Naive thymus-derived CD4-positive, alpha-beta T cell (primary cell): ENCODE measurements at regions of chr7 and their contacts with region 1.

Region 1: DNA sequence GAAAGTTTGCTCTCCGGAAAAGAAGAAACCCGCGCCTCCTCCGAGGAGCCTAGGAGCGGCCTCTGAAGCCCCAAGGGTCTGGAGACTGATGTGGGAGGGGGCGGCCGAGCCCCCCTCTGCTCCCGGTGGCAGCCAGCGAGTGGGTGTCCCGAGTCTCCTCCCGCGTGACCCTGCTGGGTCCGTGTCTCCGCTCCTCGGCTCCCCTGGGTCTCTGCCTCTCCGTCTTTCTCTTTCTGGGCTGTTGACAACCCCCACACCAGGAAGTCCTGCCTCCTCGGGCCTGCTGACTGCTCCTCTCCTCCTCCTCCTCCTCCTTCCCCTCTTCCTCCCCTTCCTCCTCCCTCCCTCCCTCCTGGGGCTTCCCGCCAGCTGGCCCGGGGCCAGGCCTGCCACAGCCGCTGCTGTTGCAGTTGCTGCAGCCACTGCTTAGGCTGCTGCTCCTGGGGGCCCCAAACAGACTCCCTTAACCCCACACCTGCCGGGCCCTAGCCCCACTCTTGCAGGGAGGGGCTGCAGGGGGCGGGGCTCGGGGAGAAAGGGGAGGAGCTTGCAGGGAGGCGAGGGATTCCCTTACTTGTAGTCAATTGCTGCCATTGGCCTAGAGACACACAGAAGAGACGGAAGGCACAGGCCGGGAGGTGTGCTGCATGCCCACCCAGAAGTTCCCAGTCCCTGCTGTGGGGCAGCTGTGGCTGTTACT is at the start of gene TSC22D4:
- DNase-seq: peak; percentile 82 to 96 (median 95)
- ATAC-seq: peak; percentile 83
- H3K4me3 ChIP-seq: peak within 1 kb of the TSS; percentile 97
- H3K4me3 Mint-ChIP-seq: peak within 1 kb of the TSS; percentile 92 to 100 (median 98)
- H3K27ac ChIP-seq: peak within 1 kb of the TSS; percentile 87
- H3K27ac Mint-ChIP-seq: peak within 1 kb of the TSS; percentile 80 to 98 (median 93)
- H3K4me1 ChIP-seq: peaks cover 42 to 51% of the 10 kb centered on the region in 2 donors
- H3K4me1 Mint-ChIP-seq: peaks cover 25 to 62% (median 38%) of the 10 kb centered on the region in 7 donors
- H3K27me3 ChIP-seq: no peaks in the 10 kb centered on the region
- H3K27me3 Mint-ChIP-seq: peaks cover 0 to 2% (median 0%) of the 10 kb centered on the region in 5 donors
- total RNA-seq, gene TSC22D4: 75.6 to 124 (median 115) TPM

Region 2: GRCh38 chr7:100435401-100436304 is 43.5 kb before region 1 on chr7:
- CTCF ChIA-PET with region 1: no interaction called
- POLR2A ChIA-PET with region 1: interaction called, 25 read pairs
- intact Hi-C with region 1: loop called (anchors 1 kb)
- DNase-seq: peak in 7 of 9 donors; percentile 44 to 57 (median 55)
- ATAC-seq: peak; percentile 26
- H3K4me3 ChIP-seq: peak overlapping the region; percentile 89
- H3K4me3 Mint-ChIP-seq: peak overlapping the region; percentile 86 to 100 (median 95)
- H3K27ac ChIP-seq: peak overlapping the region; percentile 98
- H3K27ac Mint-ChIP-seq: peak overlapping the region; percentile 88 to 99 (median 97)
- H3K4me1 ChIP-seq: peaks cover 22 to 36% of the 10 kb centered on the region in 2 donors
- H3K4me1 Mint-ChIP-seq: peaks cover 30 to 52% (median 43%) of the 10 kb centered on the region in 7 donors
- H3K27me3 ChIP-seq: no peaks in the 10 kb centered on the region
- H3K27me3 Mint-ChIP-seq: peaks cover 0 to 4% (median 0%) of the 10 kb centered on the region in 5 donors

Region 3: DNA sequence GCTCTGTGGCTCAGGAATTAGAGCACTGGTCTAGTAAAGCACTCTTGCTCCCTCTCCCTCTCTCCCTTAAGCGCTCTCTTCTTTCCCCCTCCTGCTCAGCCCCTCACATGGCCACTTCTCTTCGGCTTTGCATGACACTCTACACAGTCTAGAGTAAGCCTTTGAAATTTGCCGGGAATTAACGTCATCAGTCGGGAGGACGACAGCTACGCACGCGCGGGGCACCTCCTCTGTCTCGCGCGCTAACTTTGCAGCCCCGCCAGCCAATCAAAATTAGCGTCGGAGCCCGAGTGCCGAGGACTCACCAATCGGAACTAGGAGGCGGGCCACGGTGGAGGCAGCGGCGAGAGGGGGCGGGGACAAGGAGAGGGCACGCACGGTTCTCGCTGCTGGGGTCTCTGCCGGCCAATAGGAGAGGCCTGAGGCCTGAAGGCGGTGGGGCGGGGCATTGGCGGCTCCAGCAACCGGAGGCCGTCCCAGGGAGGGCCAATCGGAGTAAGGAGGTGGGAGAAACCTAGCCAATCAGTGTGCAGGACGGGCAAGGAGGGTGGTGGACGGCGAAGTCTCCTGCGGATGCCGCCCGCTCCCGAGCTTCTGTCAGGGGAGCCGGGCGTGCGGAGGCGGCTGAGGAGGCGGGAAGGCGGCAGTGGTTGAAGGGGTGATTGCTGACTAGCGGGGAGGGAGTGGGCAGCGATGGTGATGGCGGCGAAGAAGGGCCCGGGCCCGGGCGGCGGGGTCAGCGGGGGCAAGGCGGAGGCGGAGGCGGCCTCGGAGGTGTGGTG is 59.7 kb after region 1 on chr7 and contains the start of gene AGFG2:
- CTCF ChIA-PET with region 1: interaction called, 3 read pairs
- POLR2A ChIA-PET with region 1: interaction called, 4 read pairs
- intact Hi-C with region 1: loop called (anchors 1 kb)
- DNase-seq: peak; percentile 98 to 100 (median 100)
- ATAC-seq: peak; percentile 99
- H3K4me3 ChIP-seq: peak within 1 kb of the TSS; percentile 73
- H3K4me3 Mint-ChIP-seq: peak within 1 kb of the TSS; percentile 85 to 100 (median 96)
- H3K27ac ChIP-seq: peak within 1 kb of the TSS; percentile 64
- H3K27ac Mint-ChIP-seq: peak within 1 kb of the TSS; percentile 82 to 97 (median 90)
- H3K4me1 ChIP-seq: peaks cover 30 to 39% of the 10 kb centered on the region in 2 donors
- H3K4me1 Mint-ChIP-seq: peaks cover 26 to 53% (median 48%) of the 10 kb centered on the region in 7 donors
- H3K27me3 ChIP-seq: no peaks in the 10 kb centered on the region
- H3K27me3 Mint-ChIP-seq: peaks cover 0 to 2% (median 0%) of the 10 kb centered on the region in 5 donors
- total RNA-seq, gene AGFG2: 15.8 to 42.4 (median 23.3) TPM

Region 4: GRCh38 chr7:100563809-100564400 is 84.8 kb after region 1 on chr7:
- CTCF ChIA-PET with region 1: interaction called, 35 read pairs
- POLR2A ChIA-PET with region 1: interaction called, 5 read pairs
- intact Hi-C with region 1: loop called (anchors 1 kb)
- DNase-seq: peak; percentile 65 to 89 (median 77)
- ATAC-seq: peak; percentile 82
- H3K4me3 ChIP-seq: no peak overlapping the region
- H3K4me3 Mint-ChIP-seq: no peak overlapping the region
- H3K27ac ChIP-seq: no peak overlapping the region
- H3K27ac Mint-ChIP-seq: peak overlapping the region in 6 of 9 donors; percentile 9 to 76 (median 48)
- H3K4me1 ChIP-seq: peaks cover 8 to 22% of the 10 kb centered on the region in 2 donors
- H3K4me1 Mint-ChIP-seq: peaks cover 13 to 37% (median 28%) of the 10 kb centered on the region in 7 donors
- H3K27me3 ChIP-seq: no peaks in the 10 kb centered on the region
- H3K27me3 Mint-ChIP-seq: no peaks in the 10 kb centered on the region

Region 5: DNA sequence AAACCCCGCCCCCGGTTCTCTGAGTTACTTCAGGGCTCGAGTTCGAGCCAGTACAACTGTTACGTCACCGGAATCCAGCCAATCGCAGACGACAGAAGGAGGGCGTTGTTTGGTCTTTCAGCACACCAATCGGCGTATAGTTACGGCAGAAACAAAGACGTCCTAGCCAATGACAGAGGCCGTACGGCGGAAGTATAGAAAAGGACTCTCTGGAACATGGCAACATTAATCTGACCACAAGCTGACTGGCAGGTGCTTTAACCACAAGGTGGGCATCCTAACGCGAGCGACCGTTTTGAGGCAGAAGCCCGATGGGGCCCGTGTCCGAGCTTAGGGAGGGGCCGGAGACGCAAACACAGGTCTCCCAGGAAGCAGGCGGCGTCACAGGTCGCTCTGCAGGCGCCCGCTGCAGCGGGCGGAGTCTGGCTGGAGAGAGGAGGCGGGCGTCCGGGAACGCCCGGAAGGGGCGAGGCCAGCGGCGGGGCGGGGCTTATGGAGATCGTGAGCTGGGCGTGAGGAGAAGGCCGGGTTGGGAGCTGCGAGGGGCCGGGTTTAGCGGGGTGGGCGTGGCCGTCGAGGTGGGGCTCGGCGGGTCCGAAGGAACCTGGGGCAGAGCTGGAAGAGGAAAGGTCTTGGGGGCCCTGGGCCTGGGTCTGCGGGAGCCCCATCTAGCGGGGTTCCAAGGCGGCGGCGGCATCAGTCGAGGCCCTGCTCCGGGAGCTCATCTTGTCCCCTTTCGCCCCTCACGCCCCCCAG is 133.0 kb after region 1 on chr7 and contains the start of gene MOSPD3:
- CTCF ChIA-PET with region 1: no interaction called
- POLR2A ChIA-PET with region 1: interaction called, 4 read pairs
- intact Hi-C with region 1: loop called (anchors 1 to 2 kb)
- DNase-seq: peak; percentile 97 to 99 (median 98)
- ATAC-seq: peak; percentile 94
- H3K4me3 ChIP-seq: peak within 1 kb of the TSS; percentile 99
- H3K4me3 Mint-ChIP-seq: peak within 1 kb of the TSS; percentile 92 to 99 (median 98)
- H3K27ac ChIP-seq: peak within 1 kb of the TSS; percentile 92
- H3K27ac Mint-ChIP-seq: peak within 1 kb of the TSS; percentile 97 to 100 (median 100)
- H3K4me1 ChIP-seq: peaks cover 10 to 16% of the 10 kb centered on the region in 2 donors
- H3K4me1 Mint-ChIP-seq: peaks cover 18 to 29% (median 24%) of the 10 kb centered on the region in 7 donors
- H3K27me3 ChIP-seq: no peaks in the 10 kb centered on the region
- H3K27me3 Mint-ChIP-seq: peaks cover 0 to 8% (median 0%) of the 10 kb centered on the region in 5 donors
- total RNA-seq, gene MOSPD3: 8.8 to 54.9 (median 13.1) TPM

Region 6: GRCh38 chr7:100691676-100692577 is 212.8 kb after region 1 on chr7:
- CTCF ChIA-PET with region 1: interaction called, 3 read pairs
- POLR2A ChIA-PET with region 1: interaction called, 8 read pairs
- intact Hi-C with region 1: loop called in 1 of 2 experiments (anchors 5 kb)
- DNase-seq: peak; percentile 64 to 85 (median 78)
- ATAC-seq: peak; percentile 79
- H3K4me3 ChIP-seq: peak overlapping the region; percentile 67
- H3K4me3 Mint-ChIP-seq: peak overlapping the region; percentile 92 to 100 (median 94)
- H3K27ac ChIP-seq: peak overlapping the region; percentile 73
- H3K27ac Mint-ChIP-seq: peak overlapping the region; percentile 62 to 96 (median 95)
- H3K4me1 ChIP-seq: peaks cover 23 to 27% of the 10 kb centered on the region in 2 donors
- H3K4me1 Mint-ChIP-seq: peaks cover 29 to 54% (median 41%) of the 10 kb centered on the region in 7 donors
- H3K27me3 ChIP-seq: no peaks in the 10 kb centered on the region
- H3K27me3 Mint-ChIP-seq: peaks cover 0 to 16% (median 0%) of the 10 kb centered on the region in 5 donors

Region 7: DNA sequence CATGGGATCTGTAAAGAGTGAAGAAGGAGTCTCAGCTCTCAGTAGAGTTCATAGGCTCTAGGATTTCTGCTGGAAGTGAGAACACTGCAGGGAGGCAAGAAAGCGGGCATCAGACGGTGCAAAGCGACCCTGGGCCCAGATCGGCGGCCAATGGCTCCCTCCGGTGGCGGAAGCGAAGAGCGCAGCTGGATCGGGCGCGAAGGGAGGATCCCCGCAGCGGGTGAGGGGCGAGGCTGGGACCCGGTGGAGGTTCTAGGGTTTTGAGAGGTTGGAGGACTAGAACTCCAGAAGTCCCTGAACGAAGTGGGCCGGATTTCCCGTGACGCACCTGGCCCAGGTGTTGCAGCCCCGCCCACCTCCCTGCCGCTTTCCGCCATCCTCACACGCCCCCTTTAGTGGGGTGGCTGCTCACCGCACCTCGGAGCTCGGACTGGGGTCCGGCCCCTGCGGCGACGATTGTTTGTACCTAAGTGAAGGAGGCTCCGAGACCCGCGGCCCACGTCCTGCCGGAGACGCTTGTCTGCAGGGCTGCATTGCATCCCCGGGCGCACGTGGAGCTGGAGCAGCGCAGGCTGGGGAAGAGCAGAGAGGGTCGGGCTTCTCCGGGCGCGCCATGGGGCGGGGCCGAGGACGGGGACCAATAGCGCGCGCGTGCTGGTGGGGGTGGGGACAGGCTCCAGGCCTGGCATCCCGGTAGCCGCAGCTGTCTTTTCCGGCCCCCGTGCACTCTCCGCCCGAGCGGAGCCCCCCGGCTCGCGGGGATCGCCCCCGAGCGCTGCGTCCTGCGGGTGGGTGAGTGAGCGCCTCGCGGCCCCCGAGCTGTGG is 373.1 kb after region 1 on chr7 and contains the start of gene SLC12A9:
- CTCF ChIA-PET with region 1: no interaction called
- POLR2A ChIA-PET with region 1: interaction called, 4 read pairs
- intact Hi-C with region 1: loop called in 1 of 2 experiments (anchors 5 kb)
- DNase-seq: peak; percentile 71 to 90 (median 85)
- ATAC-seq: peak; percentile 96
- H3K4me3 ChIP-seq: peak within 1 kb of the TSS; percentile 73
- H3K4me3 Mint-ChIP-seq: peak within 1 kb of the TSS; percentile 89 to 95 (median 92)
- H3K27ac ChIP-seq: peak within 1 kb of the TSS; percentile 76
- H3K27ac Mint-ChIP-seq: peak within 1 kb of the TSS; percentile 71 to 97 (median 90)
- H3K4me1 ChIP-seq: peaks cover 8 to 16% of the 10 kb centered on the region in 2 donors
- H3K4me1 Mint-ChIP-seq: peaks cover 0 to 31% (median 19%) of the 10 kb centered on the region in 7 donors
- H3K27me3 ChIP-seq: no peaks in the 10 kb centered on the region
- H3K27me3 Mint-ChIP-seq: no peaks in the 10 kb centered on the region
- total RNA-seq, gene SLC12A9: 50.4 to 78.6 (median 62.7) TPM